ENCODE measurements at regions of chr14 and their contacts with region 1.

Region 1: DNA sequence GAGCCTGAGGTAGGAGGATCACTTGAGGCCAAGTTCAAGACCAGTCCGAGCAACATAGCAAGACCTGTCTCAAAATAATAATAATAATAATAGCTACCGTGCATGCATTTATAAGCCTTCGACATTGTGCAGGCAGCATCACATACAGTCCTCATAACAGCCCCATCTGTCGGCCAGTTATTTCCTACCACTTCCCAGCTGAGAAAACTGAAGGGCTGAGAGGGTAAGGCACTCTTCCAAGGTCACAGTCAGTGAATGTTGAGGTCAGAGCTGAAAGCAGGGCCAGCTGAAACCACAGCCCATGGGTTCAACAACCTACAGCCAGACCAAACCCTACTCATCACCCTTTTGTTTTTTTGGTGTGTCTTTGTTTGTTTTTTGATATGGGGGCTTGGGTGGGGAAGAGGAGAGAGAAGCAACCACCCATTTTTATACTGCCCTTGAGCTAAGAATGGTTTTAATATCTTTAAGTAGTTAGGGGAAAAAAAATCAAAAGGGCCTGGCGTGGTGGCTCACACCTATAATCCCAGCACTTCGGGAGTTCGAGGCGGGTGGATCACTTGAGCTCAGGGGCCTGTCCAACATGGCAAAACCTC is 16.8 kb upstream of the ITPK1 start:
- DNase-seq: peak; percentile 21
- H3K4me3 Mint-ChIP-seq: no peak overlapping the region
- H3K27ac Mint-ChIP-seq: no peak overlapping the region
- H3K4me1 Mint-ChIP-seq: no peaks in the 10 kb centered on the region
- H3K27me3 Mint-ChIP-seq: peaks cover 4% of the 10 kb centered on the region

Region 2: DNA sequence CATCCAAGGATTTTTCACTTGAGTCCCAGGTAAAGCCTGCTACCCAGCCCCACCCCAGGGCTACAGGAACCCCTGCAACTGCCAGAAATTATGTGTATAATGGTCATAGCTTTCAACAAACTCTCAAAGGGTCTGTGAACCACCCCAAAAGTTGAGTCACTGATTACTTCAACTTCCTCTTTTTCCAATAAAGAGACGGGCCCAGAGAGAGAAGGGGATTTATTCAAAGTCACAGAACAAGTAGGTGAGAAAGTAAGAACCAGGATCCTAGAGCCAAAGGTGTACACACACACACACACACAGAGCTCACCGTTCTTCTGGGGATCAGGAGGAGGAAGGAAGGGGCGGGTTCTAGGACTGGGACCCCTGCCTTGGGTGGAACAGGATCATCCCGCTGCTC is 12.1 kb before region 1 on chr14:
- CTCF ChIA-PET with region 1: interaction called, 152 read pairs
- POLR2A ChIA-PET with region 1: no interaction called
- intact Hi-C with region 1: no loop called
- DNase-seq: no peak
- H3K4me3 Mint-ChIP-seq: no peak overlapping the region
- H3K27ac Mint-ChIP-seq: no peak overlapping the region
- H3K4me1 Mint-ChIP-seq: peaks cover 6% of the 10 kb centered on the region
- H3K27me3 Mint-ChIP-seq: no peaks in the 10 kb centered on the region

Region 3: GRCh38 chr14:93285044-93285443 is 152.5 kb after region 1 on chr14:
- CTCF ChIA-PET with region 1: no interaction called
- POLR2A ChIA-PET with region 1: no interaction called
- intact Hi-C with region 1: no loop called
- DNase-seq: no peak
- H3K4me3 Mint-ChIP-seq: no peak overlapping the region
- H3K27ac Mint-ChIP-seq: no peak overlapping the region
- H3K4me1 Mint-ChIP-seq: peaks cover 4% of the 10 kb centered on the region
- H3K27me3 Mint-ChIP-seq: no peaks in the 10 kb centered on the region